ENCODE measurements at regions of chr16 and their contacts with region 1.

Region 1: DNA sequence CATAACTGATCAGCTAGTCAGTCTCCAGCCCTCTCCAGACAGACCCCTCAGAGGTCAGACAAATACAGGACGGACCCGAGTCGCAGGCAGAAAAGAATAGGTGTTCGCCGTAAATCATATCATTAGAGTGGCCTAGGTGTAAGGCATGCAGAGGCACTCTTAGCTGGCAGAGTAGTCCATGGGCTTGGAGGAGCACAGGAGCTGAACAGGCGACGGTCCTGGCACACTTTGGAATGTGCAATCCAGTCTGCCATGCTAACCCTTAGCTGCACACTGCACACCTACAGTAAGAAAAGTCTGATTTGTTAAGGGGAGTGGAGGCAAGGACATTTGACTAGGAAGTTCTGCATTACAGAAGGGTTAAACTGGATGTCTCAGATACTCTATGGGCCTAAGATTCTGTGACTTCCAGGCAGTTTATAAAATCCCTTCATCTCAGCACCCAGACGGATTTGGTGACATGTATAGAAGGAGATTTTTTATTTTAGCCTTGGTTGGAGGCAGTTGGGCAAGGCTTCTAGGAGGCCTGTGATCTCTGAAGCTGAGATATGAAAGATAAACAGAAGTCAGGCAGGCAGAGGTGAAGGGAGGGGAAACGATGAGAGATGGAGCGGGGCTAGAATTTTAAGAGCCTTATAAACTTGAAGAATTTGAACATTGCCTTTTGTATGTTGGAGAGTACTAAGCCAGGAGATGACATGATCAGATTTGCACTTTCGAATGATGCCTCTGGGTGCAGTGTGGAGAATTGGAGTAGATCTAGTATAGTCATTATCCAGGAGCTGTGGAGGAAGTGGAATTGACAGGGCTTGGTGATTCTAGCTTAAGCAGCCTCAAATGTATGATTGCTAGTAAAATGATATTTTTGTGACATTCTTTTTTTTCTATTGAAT is 34.6 kb upstream of the SLC5A11 start:
- DNase-seq: no peak
- H3K4me3 ChIP-seq: no peak overlapping the region
- H3K27ac ChIP-seq: peak overlapping the region in 1 of 2 donors; percentile 11
- H3K4me1 ChIP-seq: no peaks in the 10 kb centered on the region
- H3K27me3 ChIP-seq: no peaks in the 10 kb centered on the region
- CTCF ChIP-seq: no peak

Region 2: GRCh38 chr16:24568392-24568791 is 242.8 kb before region 1 on chr16:
- intact Hi-C with region 1: loop called (anchors 10 kb)
- DNase-seq: no peak
- H3K4me3 ChIP-seq: no peak overlapping the region
- H3K27ac ChIP-seq: no peak overlapping the region
- H3K4me1 ChIP-seq: no peaks in the 10 kb centered on the region
- H3K27me3 ChIP-seq: no peaks in the 10 kb centered on the region
- CTCF ChIP-seq: peak; percentile 14